ENCODE measurements at regions of chr1 and their contacts with region 1.

Region 1: DNA sequence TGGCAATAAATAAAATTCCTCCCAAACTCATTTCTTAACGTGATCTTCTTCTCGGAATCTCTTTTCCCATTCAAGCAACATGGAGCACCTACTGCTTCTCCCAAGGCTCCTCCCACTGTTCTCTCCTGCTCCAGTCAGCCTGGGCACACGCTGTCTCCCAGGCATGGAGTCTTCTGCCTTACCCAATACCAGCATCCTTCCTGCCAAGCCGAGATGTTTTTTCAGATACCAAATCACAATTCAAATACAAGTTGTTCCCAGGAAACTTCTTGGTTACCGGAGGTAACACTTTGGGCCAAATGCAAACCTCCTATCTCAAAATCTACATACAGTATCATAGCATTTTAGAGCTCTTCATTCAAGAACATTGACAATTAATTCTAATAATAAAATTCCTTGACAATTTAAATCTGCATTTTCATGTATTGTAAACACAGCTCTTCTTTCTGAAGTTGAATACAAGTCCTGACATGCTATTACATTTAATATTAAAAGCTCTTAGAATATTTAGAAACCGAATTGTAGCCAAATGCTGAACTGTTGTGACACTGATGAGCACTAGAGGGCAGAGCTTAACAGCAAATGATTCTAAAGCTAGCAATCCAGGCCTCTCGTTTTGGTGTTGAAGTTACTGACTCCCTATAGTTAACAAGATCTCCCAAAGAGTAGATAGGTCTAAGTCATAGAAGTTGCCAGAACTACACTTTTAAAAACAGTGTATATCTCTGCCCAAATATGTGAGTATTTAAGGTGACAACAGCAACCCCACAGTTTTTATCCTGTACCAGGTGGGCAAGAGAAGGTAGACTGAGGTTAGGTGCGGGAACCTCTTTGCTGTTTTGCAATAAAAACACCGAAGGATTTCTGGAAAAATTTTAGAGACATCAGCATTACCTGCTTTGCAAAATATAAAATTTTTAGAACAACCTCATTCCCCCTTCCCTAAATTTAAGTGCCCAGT is 52.3 kb downstream of the BCAR3 start:
- DNase-seq: no peak
- H3K4me3 ChIP-seq: no peak overlapping the region
- H3K27ac ChIP-seq: no peak overlapping the region
- H3K4me1 ChIP-seq: peaks cover 40% of the 10 kb centered on the region
- H3K27me3 ChIP-seq: no peaks in the 10 kb centered on the region
- CTCF ChIP-seq: peak; percentile 89

Region 2: DNA sequence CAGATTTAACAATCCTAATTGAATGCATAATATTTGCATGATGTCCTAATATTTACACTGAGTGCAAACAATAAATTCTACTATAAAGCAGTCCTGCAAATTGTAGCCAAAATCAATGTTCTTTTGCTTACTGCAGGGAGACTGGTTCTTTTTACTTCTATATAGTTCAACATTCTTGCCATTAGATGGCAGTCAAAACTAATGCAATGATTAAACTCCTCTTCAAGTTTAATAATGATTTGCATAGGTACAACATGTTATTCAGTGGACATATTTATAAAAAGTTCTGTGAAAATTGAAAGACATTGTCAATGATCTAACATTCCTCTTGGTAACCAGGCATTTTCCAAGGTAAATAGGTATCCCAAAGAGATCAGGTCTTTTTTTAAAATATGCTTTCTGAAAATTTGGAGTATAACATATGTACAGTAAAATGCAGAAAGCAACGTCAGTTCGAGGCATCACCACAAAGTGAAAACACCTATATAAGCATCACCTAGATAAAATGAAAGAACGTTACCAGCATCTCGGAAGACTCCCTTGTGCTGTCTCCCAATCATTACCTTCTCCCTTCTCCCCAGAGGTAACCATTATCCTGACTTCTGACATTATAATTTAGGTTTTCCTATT is 191.3 kb before region 1 on chr1:
- intact Hi-C with region 1: loop called (anchors 5 kb)
- DNase-seq: no peak
- H3K4me3 ChIP-seq: no peak overlapping the region
- H3K27ac ChIP-seq: no peak overlapping the region
- H3K4me1 ChIP-seq: peaks cover 11% of the 10 kb centered on the region
- H3K27me3 ChIP-seq: no peaks in the 10 kb centered on the region
- CTCF ChIP-seq: peak; percentile 81

Region 3: GRCh38 chr1:93680757-93681550 is 51.6 kb after region 1 on chr1:
- intact Hi-C with region 1: loop called (anchors 10 kb)
- DNase-seq: peak; percentile 86
- H3K4me3 ChIP-seq: peak overlapping the region; percentile 95
- H3K27ac ChIP-seq: peak overlapping the region; percentile 94
- H3K4me1 ChIP-seq: peaks cover 61% of the 10 kb centered on the region
- H3K27me3 ChIP-seq: no peaks in the 10 kb centered on the region
- CTCF ChIP-seq: peak; percentile 71

Region 4: DNA sequence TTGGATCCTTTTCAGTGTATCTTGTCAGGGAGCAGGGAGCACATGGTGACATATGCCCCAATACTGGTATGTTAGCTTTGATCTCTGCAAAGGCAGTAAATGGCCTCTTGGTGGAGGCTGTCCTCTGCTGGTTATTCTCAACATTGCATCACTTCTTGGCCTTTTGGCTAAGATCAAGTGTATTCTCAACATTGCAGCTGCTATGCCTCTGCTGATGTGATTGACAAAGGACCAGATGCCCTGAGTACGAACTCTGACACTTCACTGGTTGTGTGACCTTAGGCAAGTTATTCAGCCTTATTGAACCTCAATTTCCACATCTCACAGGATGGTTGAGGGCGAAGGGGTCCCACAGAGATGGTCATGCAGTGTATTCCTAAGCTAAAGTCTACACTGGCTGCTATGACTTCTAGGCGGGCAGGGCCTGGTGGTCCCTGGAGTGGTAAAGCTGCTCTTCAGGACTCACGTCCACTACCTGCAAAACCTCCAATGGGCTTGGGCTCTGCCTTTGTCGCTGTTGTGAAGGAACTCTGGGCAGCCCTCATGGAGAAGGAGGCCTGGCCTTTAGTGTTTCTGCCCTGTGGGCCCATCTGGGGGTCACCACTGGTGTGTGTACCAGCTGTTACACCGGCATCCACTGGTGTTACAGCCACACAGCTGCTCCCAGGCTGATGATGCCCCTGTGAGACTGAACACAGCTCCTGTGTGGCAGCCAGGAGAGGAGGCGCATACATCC is 184.8 kb after region 1 on chr1:
- intact Hi-C with region 1: loop called (anchors 1 kb)
- DNase-seq: no peak
- H3K4me3 ChIP-seq: no peak overlapping the region
- H3K27ac ChIP-seq: no peak overlapping the region
- H3K4me1 ChIP-seq: peaks cover 51% of the 10 kb centered on the region
- H3K27me3 ChIP-seq: no peaks in the 10 kb centered on the region
- CTCF ChIP-seq: peak; percentile 99